Activated T-helper 1 cell treated with anti-CD3 and anti-CD28 coated beads, Interleukin-12 subunit alpha, Interleukin-12 subunit beta, Interleukin-2, Interleukin-4 antibody, amounts not matched to agents 30 ng/mL and 10 ng/mL and 1 ng/mL, durations not matched to agents 14 hours and 24 hours and 36 hours (primary cell): ENCODE measurements at regions of chr16 and their contacts with region 1.

Region 1: GRCh38 chr16:10918294-10919002 is 23.8 kb downstream of the DEXI start:
- DNase-seq: peak; percentile 71
- H3K4me3 Mint-ChIP-seq: no peak overlapping the region
- H3K27ac Mint-ChIP-seq: no peak overlapping the region
- H3K4me1 Mint-ChIP-seq: peaks cover 30% of the 10 kb centered on the region
- H3K27me3 Mint-ChIP-seq: no peaks in the 10 kb centered on the region

Region 2: DNA sequence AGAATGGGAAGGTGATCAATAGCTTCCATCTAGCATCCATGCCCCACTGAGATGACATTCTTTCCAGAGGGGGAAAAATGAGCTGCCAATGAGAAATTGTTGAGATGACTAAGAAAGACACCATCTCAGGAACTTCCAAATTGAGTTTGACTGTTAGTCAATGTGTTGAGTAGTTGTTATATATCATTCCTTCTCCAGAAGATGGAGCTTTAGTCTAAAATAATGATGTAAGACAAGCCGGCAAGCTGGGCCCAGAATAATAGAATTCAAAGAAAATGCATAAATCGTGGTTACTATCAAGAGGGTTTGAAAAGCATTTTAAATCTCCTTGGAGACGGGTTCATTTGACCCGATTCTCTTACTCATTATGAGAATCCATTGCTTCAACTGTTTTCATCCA is 603.6 kb before region 1 on chr16:
- intact Hi-C with region 1: loop called (anchors 10 kb)
- DNase-seq: no peak
- H3K4me3 Mint-ChIP-seq: no peak overlapping the region
- H3K27ac Mint-ChIP-seq: no peak overlapping the region
- H3K4me1 Mint-ChIP-seq: peaks cover 17% of the 10 kb centered on the region
- H3K27me3 Mint-ChIP-seq: no peaks in the 10 kb centered on the region

Region 3: DNA sequence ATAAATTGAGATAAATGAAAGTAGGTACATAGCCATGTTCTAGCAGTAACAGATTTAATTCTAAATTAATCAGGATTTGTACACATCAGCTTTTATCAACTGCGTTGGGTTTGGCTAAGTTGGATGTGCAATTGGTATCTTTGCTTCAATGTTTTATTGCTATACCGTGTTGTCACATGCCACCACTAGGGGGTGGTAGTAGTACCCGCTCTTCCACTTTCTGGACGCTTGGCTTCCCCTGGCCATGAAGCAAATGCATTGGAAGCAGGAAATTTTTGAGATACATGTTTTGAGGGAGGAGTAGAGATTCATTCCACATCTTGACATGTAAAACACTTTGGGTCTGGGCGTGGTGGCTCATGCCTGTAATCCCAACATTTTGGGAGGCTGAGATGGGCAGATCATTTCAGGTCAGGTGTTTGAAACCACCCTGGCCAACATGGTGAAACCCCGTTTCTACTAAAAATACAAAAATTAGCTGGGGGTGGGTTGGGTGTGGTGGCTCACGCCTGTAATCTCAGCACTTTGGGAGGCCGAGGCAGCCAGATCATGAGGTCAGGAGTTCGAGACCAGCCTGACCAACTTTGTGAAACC is 396.7 kb before region 1 on chr16:
- intact Hi-C with region 1: loop called (anchors 1 kb)
- DNase-seq: no peak
- H3K4me3 Mint-ChIP-seq: no peak overlapping the region
- H3K27ac Mint-ChIP-seq: no peak overlapping the region
- H3K4me1 Mint-ChIP-seq: peaks cover 4% of the 10 kb centered on the region
- H3K27me3 Mint-ChIP-seq: no peaks in the 10 kb centered on the region

Region 4: DNA sequence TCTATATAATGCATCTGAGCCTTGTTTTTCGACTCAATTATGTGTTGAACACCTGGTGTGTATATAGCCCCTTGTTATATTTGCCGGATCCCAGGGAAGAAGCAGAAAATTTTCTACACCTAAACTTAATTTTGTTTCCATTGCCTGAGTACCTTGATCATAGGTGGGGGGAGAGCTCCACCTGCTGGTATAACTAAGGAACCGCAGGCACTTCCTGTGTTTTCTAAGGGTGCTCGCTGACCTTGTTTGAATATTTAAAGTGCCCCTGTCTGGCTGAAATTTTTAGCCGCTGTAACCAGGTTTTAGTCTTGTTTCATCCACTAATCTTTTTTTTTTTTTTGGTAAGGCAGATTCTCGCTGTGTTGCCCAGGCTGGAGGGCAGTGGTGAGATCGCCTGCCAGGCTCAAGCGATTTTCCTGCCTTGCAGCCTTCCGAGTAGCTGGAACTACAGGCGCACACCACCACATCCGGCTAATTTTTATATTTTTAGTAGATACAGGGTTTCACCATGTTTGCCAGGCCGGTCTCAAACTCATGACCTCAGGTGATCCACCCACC is 181.3 kb before region 1 on chr16:
- intact Hi-C with region 1: loop called (anchors 1 kb)
- DNase-seq: peak; percentile 60
- H3K4me3 Mint-ChIP-seq: peak overlapping the region; percentile 39
- H3K27ac Mint-ChIP-seq: peak overlapping the region; percentile 58
- H3K4me1 Mint-ChIP-seq: peaks cover 36% of the 10 kb centered on the region
- H3K27me3 Mint-ChIP-seq: peaks cover 2% of the 10 kb centered on the region

Region 5: GRCh38 chr16:10754941-10755340 is 163.5 kb before region 1 on chr16:
- intact Hi-C with region 1: no loop called
- DNase-seq: no peak
- H3K4me3 Mint-ChIP-seq: no peak overlapping the region
- H3K27ac Mint-ChIP-seq: peak overlapping the region; percentile 52
- H3K4me1 Mint-ChIP-seq: peaks cover 18% of the 10 kb centered on the region
- H3K27me3 Mint-ChIP-seq: no peaks in the 10 kb centered on the region

Region 6: DNA sequence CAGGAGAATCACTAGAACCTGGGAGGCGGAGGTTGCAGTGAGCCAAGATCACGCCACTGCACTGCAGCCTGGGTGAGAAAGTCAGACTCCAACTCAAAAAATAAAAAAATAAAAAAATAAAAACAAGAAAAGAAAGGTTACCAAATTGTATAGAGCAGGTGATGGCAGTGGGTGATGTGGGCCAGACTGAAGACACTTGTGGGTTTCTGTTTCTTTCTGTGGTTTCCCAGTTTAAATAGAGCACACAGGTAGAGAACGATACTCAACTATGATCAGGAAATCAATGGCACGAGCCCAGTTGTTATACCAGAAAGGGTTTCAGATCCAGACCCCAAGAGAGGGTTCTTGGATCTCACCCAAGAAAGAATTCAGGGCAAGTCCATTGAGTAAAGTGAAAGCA is 142.2 kb before region 1 on chr16:
- intact Hi-C with region 1: no loop called
- DNase-seq: peak; percentile 6
- H3K4me3 Mint-ChIP-seq: no peak overlapping the region
- H3K27ac Mint-ChIP-seq: no peak overlapping the region
- H3K4me1 Mint-ChIP-seq: peaks cover 5% of the 10 kb centered on the region
- H3K27me3 Mint-ChIP-seq: peaks cover 34% of the 10 kb centered on the region

Region 7: DNA sequence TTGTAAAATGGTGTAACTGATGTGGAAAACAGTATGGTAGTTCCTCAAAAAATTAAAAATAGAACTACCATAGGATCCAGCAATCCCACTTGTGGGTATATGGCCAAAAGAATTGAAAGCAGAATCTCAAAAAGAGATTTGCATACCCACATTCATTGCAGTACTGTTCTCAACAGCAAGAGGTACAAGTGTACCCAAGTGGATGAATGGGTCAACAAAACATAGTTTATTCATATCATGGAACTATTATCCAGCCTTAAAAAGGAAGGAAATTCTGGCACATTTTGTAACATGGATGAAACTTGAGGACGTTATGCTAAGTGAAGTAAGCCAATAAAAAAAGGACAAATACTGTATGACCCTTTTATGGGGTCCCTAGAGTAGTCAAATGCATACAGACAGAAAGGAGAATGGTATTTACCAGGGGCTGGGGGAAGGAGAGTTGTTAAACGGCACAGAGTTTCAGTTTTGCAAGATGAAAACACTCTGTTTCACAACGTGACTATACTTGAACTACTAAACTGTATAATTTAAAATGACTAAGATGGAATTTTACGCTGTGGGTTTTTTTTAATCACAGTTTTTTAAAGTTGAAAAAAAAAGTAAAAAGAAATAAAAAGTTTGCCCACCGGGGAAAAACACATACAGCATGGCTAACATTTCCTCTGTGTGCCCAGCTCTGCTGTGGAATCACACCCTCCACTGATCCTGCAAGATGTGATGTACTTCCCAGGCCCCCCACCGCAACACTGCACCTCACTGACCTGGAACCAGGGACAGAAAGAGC is 105.9 kb before region 1 on chr16:
- intact Hi-C with region 1: loop called (anchors 1 kb)
- DNase-seq: no peak
- H3K4me3 Mint-ChIP-seq: peak overlapping the region; percentile 66
- H3K27ac Mint-ChIP-seq: peak overlapping the region; percentile 67
- H3K4me1 Mint-ChIP-seq: peaks cover 20% of the 10 kb centered on the region
- H3K27me3 Mint-ChIP-seq: peaks cover 3% of the 10 kb centered on the region

Region 8: GRCh38 chr16:10876799-10877341 is 41.6 kb before region 1 on chr16 and contains the start of gene CIITA:
- intact Hi-C with region 1: loop called (anchors 1 kb)
- DNase-seq: peak; percentile 53
- H3K4me3 Mint-ChIP-seq: peak within 1 kb of the TSS; percentile 86
- H3K27ac Mint-ChIP-seq: peak within 1 kb of the TSS; percentile 59
- H3K4me1 Mint-ChIP-seq: peaks cover 88% of the 10 kb centered on the region
- H3K27me3 Mint-ChIP-seq: peaks cover 14% of the 10 kb centered on the region
- total RNA-seq, gene CIITA: 12.0 and 13.0 TPM in 2 replicates